A673 (cell line): ENCODE measurements at regions of chr4 and their contacts with region 1.

Region 1: DNA sequence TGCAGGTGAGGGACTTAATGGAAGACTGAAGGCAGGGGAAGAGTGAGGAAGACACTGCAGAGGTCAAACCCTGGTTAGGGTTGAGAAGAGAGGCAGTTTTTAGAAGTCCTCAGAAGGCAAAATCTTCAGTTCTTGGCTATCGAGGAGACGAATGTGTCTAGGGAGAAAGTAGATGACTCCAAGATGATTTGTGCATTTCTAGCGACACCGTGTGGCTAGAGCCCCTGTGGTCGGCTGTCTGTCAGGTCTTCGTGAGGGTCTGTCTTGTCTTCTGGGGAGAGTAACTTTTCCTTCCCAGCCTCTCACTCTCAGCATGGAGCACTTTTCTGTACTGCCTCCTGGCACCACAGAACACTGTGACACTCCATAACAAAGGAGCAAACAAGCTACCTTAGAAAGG is 458.1 kb downstream of the STIM2 start:
- DNase-seq: peak; percentile 80
- H3K4me3 ChIP-seq: no peak overlapping the region
- H3K27ac ChIP-seq: no peak overlapping the region
- H3K4me1 ChIP-seq: no peaks in the 10 kb centered on the region
- H3K27me3 ChIP-seq: no peaks in the 10 kb centered on the region
- CTCF ChIP-seq: peak; percentile 75

Region 2: DNA sequence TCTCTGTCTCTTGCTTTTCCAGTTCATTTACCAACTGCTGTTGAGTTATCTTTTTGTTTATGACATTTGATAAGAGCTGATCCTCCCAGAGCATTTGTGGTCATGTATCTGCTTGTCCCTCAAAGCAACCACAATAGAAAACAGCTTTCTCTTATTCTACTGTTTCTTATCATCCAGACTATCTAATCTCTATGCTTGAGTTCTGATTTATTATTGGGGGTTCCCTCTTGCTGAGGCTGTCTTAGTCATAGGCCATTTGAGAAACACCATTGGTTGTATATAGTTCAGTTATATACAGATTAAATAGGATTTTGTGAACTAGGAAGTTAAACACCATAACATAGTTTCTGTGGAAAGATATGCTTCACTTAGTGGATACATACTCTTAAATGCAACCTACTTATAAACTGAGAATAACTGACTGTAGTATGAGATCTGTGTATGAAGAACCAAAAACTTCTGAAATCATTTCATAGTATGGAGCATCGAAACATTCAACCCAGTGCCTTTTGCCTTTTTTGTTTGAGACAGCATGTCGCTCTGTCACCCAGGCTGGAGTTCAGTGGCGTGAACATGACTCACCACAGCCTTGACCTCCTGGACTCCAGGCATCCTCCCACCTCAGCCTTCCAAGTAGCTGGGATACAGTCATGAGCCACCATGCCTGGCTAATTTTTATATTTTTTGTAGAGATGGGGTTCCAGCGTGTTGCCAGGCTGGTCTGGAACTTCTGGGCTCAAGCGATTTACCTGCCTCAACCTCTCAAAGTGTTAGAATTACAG is 382.3 kb before region 1 on chr4:
- CTCF ChIA-PET with region 1: no interaction called
- POLR2A ChIA-PET with region 1: no interaction called
- intact Hi-C with region 1: no loop called
- DNase-seq: no peak
- H3K4me3 ChIP-seq: no peak overlapping the region
- H3K27ac ChIP-seq: no peak overlapping the region
- H3K4me1 ChIP-seq: peaks cover 21% of the 10 kb centered on the region
- H3K27me3 ChIP-seq: no peaks in the 10 kb centered on the region
- CTCF ChIP-seq: no peak

Region 3: DNA sequence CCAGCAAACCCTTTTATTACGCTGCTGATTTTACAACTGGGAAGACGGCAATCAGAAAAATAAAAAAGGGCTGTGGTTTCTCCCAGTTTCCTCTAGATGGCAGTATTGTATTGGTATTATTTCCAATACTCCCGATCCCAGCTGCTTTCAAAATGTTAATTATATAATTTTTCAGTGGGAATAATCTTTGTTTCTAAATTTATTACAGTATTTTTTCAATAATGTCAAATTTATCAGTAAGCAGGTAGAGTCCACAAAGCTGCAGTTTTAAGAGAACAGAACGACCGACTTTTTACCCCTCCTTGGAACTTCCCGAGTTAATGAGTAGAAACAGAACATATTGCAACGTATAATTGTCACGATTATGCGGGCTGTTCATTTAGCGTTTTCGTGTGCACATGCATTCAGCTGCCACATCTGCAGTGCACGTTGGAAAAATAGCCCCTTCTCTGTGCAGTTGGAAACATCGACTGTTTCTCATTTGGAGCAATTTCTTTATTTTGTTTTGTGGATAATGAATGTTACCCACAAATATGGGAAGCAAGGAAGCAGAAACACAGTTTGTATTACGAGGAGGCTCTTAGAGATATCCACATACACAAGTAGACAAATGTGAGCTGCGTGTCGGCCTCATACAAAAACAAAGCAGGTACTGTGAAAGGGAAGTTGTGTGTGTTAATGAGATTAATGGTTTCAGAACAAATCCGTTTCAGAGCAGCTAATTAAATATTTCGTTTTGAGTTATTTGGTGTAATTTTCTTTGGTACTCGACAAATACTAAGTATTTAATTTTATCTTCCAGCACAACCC is 270.1 kb before region 1 on chr4:
- CTCF ChIA-PET with region 1: interaction called, 3 read pairs
- POLR2A ChIA-PET with region 1: no interaction called
- intact Hi-C with region 1: loop called (anchors 1 kb)
- DNase-seq: peak; percentile 60
- H3K4me3 ChIP-seq: peak overlapping the region; percentile 36
- H3K27ac ChIP-seq: no peak overlapping the region
- H3K4me1 ChIP-seq: no peaks in the 10 kb centered on the region
- H3K27me3 ChIP-seq: no peaks in the 10 kb centered on the region
- CTCF ChIP-seq: peak; percentile 77

Region 4: DNA sequence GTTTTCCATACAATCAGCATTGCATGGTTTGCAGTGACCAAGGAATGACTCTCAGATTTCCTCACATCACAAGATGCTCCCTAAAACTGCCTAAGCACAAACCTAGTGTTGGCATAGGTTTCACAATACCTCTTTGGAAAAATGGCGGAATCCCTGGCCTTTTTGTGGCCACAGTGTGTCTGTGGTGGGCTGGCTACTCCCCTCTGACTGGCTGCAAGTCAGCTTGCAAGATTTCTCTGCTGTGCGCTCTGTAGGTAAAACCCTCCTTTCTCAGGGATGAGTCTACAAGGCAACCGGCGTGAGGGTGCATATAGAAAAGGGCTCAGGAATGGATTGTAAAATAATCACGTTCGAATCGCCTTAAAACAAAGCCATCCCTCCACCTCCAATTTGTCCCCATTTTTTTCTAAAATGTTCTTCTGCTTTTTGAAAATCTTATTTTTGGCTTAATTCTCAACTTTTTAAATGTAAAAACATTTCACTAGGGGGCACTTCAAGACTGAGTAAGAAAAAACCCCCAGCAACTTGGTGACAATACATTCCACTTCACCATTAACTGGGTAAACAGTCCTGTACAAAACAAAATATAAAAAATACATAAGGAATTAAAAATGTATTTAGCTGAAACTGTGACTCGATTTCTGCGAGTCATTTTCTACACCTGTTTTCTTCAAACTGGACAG is 222.5 kb before region 1 on chr4:
- CTCF ChIA-PET with region 1: no interaction called
- POLR2A ChIA-PET with region 1: no interaction called
- intact Hi-C with region 1: loop called (anchors 2 kb)
- DNase-seq: no peak
- H3K4me3 ChIP-seq: no peak overlapping the region
- H3K27ac ChIP-seq: no peak overlapping the region
- H3K4me1 ChIP-seq: no peaks in the 10 kb centered on the region
- H3K27me3 ChIP-seq: no peaks in the 10 kb centered on the region
- CTCF ChIP-seq: peak; percentile 33; the same call in 1 of the 2 replicates

Region 5: GRCh38 chr4:27154706-27155105 is 164.0 kb before region 1 on chr4:
- CTCF ChIA-PET with region 1: no interaction called
- POLR2A ChIA-PET with region 1: no interaction called
- intact Hi-C with region 1: no loop called
- DNase-seq: no peak
- H3K4me3 ChIP-seq: no peak overlapping the region
- H3K27ac ChIP-seq: no peak overlapping the region
- H3K4me1 ChIP-seq: no peaks in the 10 kb centered on the region
- H3K27me3 ChIP-seq: no peaks in the 10 kb centered on the region
- CTCF ChIP-seq: no peak

Region 6: DNA sequence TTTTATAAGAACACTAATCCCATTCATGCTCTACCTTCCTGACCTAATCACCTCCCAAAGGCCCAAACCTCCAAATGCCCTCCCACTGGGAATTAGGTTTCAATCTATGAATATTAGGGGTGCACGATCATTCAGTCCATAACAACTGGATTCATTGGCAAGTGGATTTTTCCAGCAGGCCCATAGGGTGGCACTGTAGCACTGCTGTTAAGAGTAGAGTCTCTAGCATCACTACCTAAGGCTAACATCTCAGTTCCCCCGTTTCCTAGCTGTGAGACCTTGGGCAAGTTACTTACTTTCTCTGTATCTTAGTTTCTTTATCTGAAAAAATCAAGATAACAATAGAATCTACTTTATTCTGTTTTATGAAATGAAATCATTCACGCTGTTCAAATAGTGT is 142.3 kb before region 1 on chr4:
- CTCF ChIA-PET with region 1: interaction called, 4 read pairs
- POLR2A ChIA-PET with region 1: interaction called, 3 read pairs
- intact Hi-C with region 1: loop called (anchors 1 kb)
- DNase-seq: peak; percentile 84
- H3K4me3 ChIP-seq: no peak overlapping the region
- H3K27ac ChIP-seq: peak overlapping the region; percentile 53
- H3K4me1 ChIP-seq: peaks cover 25% of the 10 kb centered on the region
- H3K27me3 ChIP-seq: no peaks in the 10 kb centered on the region
- CTCF ChIP-seq: peak; percentile 75

Region 7: GRCh38 chr4:27239641-27240040 is 79.1 kb before region 1 on chr4:
- CTCF ChIA-PET with region 1: no interaction called
- POLR2A ChIA-PET with region 1: no interaction called
- intact Hi-C with region 1: no loop called
- DNase-seq: no peak
- H3K4me3 ChIP-seq: no peak overlapping the region
- H3K27ac ChIP-seq: no peak overlapping the region
- H3K4me1 ChIP-seq: no peaks in the 10 kb centered on the region
- H3K27me3 ChIP-seq: no peaks in the 10 kb centered on the region
- CTCF ChIP-seq: no peak

Region 8: DNA sequence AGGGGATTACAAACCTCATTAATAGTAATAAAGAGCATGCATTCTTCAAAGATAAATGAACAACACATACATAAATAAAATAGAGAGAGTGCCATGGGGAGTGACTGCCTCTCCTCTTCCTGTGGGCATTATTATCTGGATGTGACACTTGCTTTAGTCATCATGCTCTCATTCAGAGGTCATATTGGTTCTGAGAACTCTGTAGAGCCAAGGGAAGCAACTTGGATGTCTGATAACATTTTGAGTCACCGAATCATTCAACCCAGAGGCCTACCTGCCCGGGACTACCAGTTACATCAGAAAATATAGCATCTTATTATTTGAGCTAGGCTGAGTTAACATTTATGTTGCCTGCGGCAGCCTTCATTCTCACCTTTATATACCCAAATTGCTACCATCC is 31.4 kb after region 1 on chr4:
- CTCF ChIA-PET with region 1: no interaction called
- POLR2A ChIA-PET with region 1: no interaction called
- intact Hi-C with region 1: no loop called
- DNase-seq: no peak
- H3K4me3 ChIP-seq: no peak overlapping the region
- H3K27ac ChIP-seq: no peak overlapping the region
- H3K4me1 ChIP-seq: no peaks in the 10 kb centered on the region
- H3K27me3 ChIP-seq: no peaks in the 10 kb centered on the region
- CTCF ChIP-seq: no peak